Aorta (tissue), 5 donors: ENCODE measurements at regions of chr9 and their contacts with region 1.

Region 1: DNA sequence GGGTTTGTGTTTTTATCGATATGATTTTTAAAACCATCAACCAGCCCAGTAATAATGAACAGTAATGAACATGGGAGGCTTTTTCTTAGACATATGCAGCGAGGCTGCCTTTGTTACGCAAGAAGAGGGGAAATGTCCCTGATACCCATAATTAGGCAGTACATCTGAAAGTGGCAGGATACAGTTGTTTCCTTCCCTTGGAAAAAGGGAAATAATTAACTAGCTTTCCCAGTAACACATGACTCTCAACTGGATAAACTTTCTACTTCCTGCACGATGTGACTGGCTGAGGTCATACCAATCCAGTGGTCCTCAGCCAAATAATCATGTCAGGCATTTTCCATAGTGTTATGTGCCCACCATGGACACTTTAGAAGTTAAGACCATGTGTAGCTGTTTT is 431.6 kb upstream of the C9orf72 start:
- DNase-seq: no peak
- ATAC-seq: no peak
- H3K4me3 ChIP-seq: no peak overlapping the region
- H3K27ac ChIP-seq: no peak overlapping the region
- H3K4me1 ChIP-seq: no peaks in the 10 kb centered on the region
- H3K27me3 ChIP-seq: no peaks in the 10 kb centered on the region

Region 2: GRCh38 chr9:27847818-27848217 is 157.1 kb before region 1 on chr9:
- intact Hi-C with region 1: loop called in 1 of 2 experiments (anchors 10 kb)
- DNase-seq: no peak
- ATAC-seq: no peak
- H3K4me3 ChIP-seq: no peak overlapping the region
- H3K27ac ChIP-seq: no peak overlapping the region
- H3K4me1 ChIP-seq: no peaks in the 10 kb centered on the region
- H3K27me3 ChIP-seq: no peaks in the 10 kb centered on the region

Region 3: DNA sequence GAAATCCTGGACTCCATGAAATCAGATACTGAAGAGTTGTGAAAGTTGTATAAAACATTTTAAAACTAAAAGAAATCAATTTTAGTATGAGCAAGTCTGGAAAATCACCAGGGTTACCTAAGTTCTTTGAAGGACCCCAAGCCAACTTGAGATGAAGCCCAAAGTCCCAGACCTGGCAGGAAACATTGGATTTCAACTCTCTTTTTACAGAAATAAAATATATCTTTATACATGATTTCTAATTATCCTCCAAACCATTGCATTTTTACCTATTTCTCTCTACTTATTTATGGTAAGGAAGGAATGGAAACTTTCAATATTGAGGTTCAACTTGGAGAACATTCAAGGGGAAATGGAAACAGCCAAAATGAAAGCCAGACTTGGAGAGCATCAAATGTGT is 41.1 kb before region 1 on chr9:
- intact Hi-C with region 1: no loop called
- DNase-seq: no peak
- ATAC-seq: no peak
- H3K4me3 ChIP-seq: no peak overlapping the region
- H3K27ac ChIP-seq: no peak overlapping the region
- H3K4me1 ChIP-seq: no peaks in the 10 kb centered on the region
- H3K27me3 ChIP-seq: no peaks in the 10 kb centered on the region

Region 4: GRCh38 chr9:28092981-28093936 is 88.4 kb after region 1 on chr9:
- intact Hi-C with region 1: no loop called
- DNase-seq: no peak
- ATAC-seq: no peak
- H3K4me3 ChIP-seq: no peak overlapping the region
- H3K27ac ChIP-seq: no peak overlapping the region
- H3K4me1 ChIP-seq: no peaks in the 10 kb centered on the region
- H3K27me3 ChIP-seq: no peaks in the 10 kb centered on the region